ENCODE measurements at regions of chr7 and their contacts with region 1.

Region 1: GRCh38 chr7:17444673-17445072 is 146.2 kb downstream of the AHR start:
- DNase-seq: no peak
- H3K4me3 Mint-ChIP-seq: no peak overlapping the region
- H3K27ac Mint-ChIP-seq: no peak overlapping the region
- H3K4me1 Mint-ChIP-seq: peaks cover 6% of the 10 kb centered on the region
- H3K27me3 Mint-ChIP-seq: peaks cover 18% of the 10 kb centered on the region

Region 2: DNA sequence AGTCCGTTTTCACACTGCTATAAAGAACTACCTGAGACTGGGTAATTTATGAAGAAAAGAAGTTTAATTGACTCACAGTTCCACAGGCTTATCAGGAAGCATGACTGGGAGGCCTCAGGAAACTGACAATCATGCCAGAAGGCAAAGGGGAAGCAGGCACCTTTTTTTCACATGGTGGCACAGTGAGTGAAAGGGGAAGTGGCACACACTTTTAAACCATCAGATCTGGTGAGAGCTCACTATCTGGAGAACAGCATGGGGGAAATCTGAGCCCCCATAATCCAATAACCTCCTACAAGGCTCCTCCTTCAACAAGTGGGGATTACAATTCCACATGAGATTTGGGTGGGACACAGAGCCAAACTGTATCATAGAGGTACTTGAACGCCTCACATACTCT is 592.8 kb before region 1 on chr7:
- CTCF ChIA-PET with region 1: no interaction called
- POLR2A ChIA-PET with region 1: no interaction called
- intact Hi-C with region 1: no loop called
- DNase-seq: no peak
- H3K4me3 Mint-ChIP-seq: no peak overlapping the region
- H3K27ac Mint-ChIP-seq: no peak overlapping the region
- H3K4me1 Mint-ChIP-seq: peaks cover 2% of the 10 kb centered on the region
- H3K27me3 Mint-ChIP-seq: peaks cover 41% of the 10 kb centered on the region

Region 3: DNA sequence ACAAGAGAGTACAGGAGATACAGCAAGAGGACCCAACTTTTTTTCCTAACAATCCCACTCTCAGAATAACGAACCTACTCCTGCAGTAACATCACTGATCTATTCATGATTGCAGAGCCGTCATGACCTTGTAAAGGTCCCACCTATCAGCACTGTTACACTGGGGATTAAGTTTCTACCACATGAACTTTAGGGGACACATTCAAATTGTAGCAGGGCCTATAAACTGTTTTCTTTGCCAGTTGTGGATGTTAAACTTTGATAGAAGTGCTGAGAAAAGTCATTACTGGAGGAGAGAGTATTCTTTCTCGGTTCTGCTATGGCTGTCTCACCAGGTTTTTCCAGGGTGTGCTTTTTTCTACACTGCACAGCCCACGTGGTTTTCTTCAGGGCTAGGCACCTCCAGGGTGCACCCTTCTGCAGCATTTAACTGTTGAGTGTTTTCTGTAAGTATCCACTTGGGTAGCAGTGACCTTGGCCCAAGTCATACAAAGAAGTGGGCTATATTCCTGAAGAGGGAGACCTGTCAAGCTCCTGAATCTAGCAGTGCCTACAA is 277.8 kb before region 1 on chr7:
- CTCF ChIA-PET with region 1: no interaction called
- POLR2A ChIA-PET with region 1: no interaction called
- intact Hi-C with region 1: no loop called
- DNase-seq: peak; percentile 55
- H3K4me3 Mint-ChIP-seq: no peak overlapping the region
- H3K27ac Mint-ChIP-seq: no peak overlapping the region
- H3K4me1 Mint-ChIP-seq: peaks cover 37% of the 10 kb centered on the region
- H3K27me3 Mint-ChIP-seq: peaks cover 7% of the 10 kb centered on the region

Region 4: DNA sequence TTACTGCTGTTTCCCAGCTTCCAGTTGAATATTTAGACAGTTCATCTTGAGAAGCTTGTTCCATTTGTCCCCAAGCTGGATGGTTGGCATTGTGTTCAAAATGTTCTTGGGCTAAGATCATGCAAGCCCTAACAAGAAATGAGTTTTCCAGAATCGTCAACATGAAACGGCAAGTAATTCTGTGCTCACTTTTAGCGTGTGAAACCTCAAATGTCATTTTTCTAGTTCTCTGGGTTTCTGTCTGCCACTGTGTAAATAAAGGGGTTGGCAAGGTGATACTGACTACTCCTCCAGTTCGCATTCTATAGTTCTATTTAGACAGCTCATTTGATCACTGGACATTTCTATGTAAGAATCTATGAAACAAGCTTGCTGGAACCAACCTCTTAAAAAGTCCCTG is 47.8 kb after region 1 on chr7:
- CTCF ChIA-PET with region 1: no interaction called
- POLR2A ChIA-PET with region 1: no interaction called
- intact Hi-C with region 1: loop called (anchors 2 kb)
- DNase-seq: no peak
- H3K4me3 Mint-ChIP-seq: no peak overlapping the region
- H3K27ac Mint-ChIP-seq: no peak overlapping the region
- H3K4me1 Mint-ChIP-seq: peaks cover 11% of the 10 kb centered on the region
- H3K27me3 Mint-ChIP-seq: no peaks in the 10 kb centered on the region

Region 5: GRCh38 chr7:17523813-17524741 is 79.4 kb after region 1 on chr7:
- CTCF ChIA-PET with region 1: no interaction called
- POLR2A ChIA-PET with region 1: no interaction called
- intact Hi-C with region 1: loop called (anchors 10 kb)
- DNase-seq: no peak
- H3K4me3 Mint-ChIP-seq: no peak overlapping the region
- H3K27ac Mint-ChIP-seq: no peak overlapping the region
- H3K4me1 Mint-ChIP-seq: peaks cover 8% of the 10 kb centered on the region
- H3K27me3 Mint-ChIP-seq: peaks cover 3% of the 10 kb centered on the region

Region 6: GRCh38 chr7:18053177-18053928 is 608.7 kb after region 1 on chr7:
- CTCF ChIA-PET with region 1: no interaction called
- POLR2A ChIA-PET with region 1: no interaction called
- intact Hi-C with region 1: no loop called
- DNase-seq: no peak
- H3K4me3 Mint-ChIP-seq: no peak overlapping the region
- H3K27ac Mint-ChIP-seq: no peak overlapping the region
- H3K4me1 Mint-ChIP-seq: no peaks in the 10 kb centered on the region
- H3K27me3 Mint-ChIP-seq: peaks cover 12% of the 10 kb centered on the region